ENCODE measurements at regions of chr11 and their contacts with region 1.

Region 1: GRCh38 chr11:9663699-9664275 is at the start of gene SWAP70:
- DNase-seq: peak; percentile 93
- H3K4me3 ChIP-seq: peak within 1 kb of the TSS; percentile 60 to 99 (median 78)
- H3K27ac ChIP-seq: peak within 1 kb of the TSS; percentile 88 to 96 (median 92)
- H3K4me1 ChIP-seq: peaks cover 0 to 15% (median 6%) of the 10 kb centered on the region in 4 donors
- H3K27me3 ChIP-seq: no peaks in the 10 kb centered on the region
- CTCF ChIP-seq: peak; percentile 44 to 85 (median 56)
- EP300 ChIP-seq: no peak
- POLR2A ChIP-seq: peak; percentile 59
- total RNA-seq, gene SWAP70: 18.8 to 52.5 (median 29.1) TPM

Region 2: DNA sequence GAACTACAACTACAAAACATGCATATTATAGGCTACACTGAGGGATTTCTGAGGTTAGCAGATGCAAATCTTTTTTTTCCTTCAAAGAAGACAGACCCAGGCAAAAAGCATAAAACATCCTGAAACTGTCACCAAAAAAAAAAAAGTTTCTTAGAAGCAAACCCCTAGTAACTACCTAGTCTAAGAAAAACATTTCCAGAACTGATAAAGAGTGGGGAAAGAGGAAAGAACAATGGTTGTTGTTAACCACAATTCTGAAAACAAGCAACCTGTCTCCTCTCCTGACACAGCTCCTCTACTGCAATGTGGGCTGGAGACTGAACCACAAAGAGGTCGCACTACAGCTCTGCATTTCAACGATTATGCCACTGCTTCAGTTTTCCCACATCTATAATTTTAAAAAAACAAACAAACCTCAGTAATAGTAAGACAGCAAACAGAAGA is 413.6 kb before region 1 on chr11:
- in situ Hi-C with region 1: no loop called
- intact Hi-C with region 1: no loop called
- DNase-seq: no peak
- H3K4me3 ChIP-seq: no peak overlapping the region
- H3K27ac ChIP-seq: no peak overlapping the region
- H3K4me1 ChIP-seq: peaks cover 0 to 12% (median 2%) of the 10 kb centered on the region in 4 donors
- H3K27me3 ChIP-seq: no peaks in the 10 kb centered on the region
- CTCF ChIP-seq: no peak
- EP300 ChIP-seq: no peak
- POLR2A ChIP-seq: no peak

Region 3: GRCh38 chr11:9748361-9748970 is 84.7 kb after region 1 on chr11:
- in situ Hi-C with region 1: loop called in 1 of 4 experiments (anchors 10 kb)
- intact Hi-C with region 1: no loop called
- DNase-seq: peak; percentile 57
- H3K4me3 ChIP-seq: no peak overlapping the region
- H3K27ac ChIP-seq: peak overlapping the region in 3 of 4 donors; percentile 46 to 56 (median 47)
- H3K4me1 ChIP-seq: peaks cover 6 to 11% (median 8%) of the 10 kb centered on the region in 4 donors
- H3K27me3 ChIP-seq: no peaks in the 10 kb centered on the region
- CTCF ChIP-seq: peak; percentile 61 to 83 (median 68)
- EP300 ChIP-seq: no peak
- POLR2A ChIP-seq: no peak

Measured in transverse colon (tissue), 4 donors.